Activated CD4-positive, alpha-beta T cell treated with anti-CD3 and anti-CD28 coated beads, Interleukin-2, amount 10 ng/mL, durations not matched to agents 24 days and 14 days (primary cell): ENCODE measurements at regions of chr2 and their contacts with region 1.

Region 1: DNA sequence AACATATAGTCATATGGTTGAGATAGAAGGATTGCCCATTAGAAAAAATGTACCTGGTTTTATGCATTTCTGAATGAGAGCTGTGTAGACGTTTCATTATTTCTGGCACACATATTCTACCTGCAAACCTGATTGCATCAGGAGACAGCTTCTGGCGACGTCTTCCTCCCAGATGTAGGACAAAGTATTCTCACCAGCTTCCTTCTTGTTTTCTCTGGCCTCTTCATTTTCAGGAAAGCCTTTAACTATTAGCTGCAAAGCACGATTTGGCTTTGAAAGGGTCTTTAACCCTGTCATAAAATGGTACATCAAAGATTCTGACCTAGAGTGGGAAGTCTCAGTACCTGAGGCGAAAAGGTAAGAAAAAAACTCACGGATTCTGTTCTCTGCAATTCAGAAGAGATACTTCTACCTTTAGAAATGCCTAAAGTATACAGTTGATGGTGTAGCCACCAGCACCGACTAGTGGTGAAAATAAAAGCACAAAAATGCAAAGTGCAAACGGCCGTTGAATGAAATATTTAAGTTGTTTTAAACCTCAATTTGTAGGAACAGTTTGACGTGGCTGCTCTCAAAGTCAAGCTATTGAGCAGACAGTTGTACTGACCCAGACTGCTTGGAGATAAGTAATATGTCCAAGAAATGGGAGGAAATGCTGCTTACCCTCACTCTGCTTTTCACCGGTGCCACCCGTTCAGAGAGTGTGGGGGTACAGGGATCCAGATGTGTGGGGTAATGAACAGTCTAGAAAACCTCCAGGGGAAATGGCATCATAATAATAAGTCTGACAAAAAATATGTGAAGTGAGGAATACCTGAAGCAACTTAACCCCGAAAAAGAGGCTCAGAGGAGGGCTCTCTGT is 20.2 kb downstream of the IL18RAP start:
- DNase-seq: peak; percentile 86
- H3K4me3 Mint-ChIP-seq: peak overlapping the region; percentile 73
- H3K27ac Mint-ChIP-seq: peak overlapping the region; percentile 72
- H3K4me1 Mint-ChIP-seq: peaks cover 8% of the 10 kb centered on the region
- H3K27me3 Mint-ChIP-seq: no peaks in the 10 kb centered on the region

Region 2: GRCh38 chr2:102020596-102021181 is 422.5 kb before region 1 on chr2:
- intact Hi-C with region 1: loop called (anchors 1 kb)
- DNase-seq: peak; percentile 95
- H3K4me3 Mint-ChIP-seq: no peak overlapping the region
- H3K27ac Mint-ChIP-seq: no peak overlapping the region
- H3K4me1 Mint-ChIP-seq: peaks cover 6% of the 10 kb centered on the region
- H3K27me3 Mint-ChIP-seq: peaks cover 8% of the 10 kb centered on the region

Region 3: GRCh38 chr2:102235491-102235890 is 207.7 kb before region 1 on chr2:
- intact Hi-C with region 1: loop called (anchors 2 kb)
- DNase-seq: peak; percentile 77
- H3K4me3 Mint-ChIP-seq: no peak overlapping the region
- H3K27ac Mint-ChIP-seq: no peak overlapping the region
- H3K4me1 Mint-ChIP-seq: peaks cover 36% of the 10 kb centered on the region
- H3K27me3 Mint-ChIP-seq: no peaks in the 10 kb centered on the region

Region 4: GRCh38 chr2:102251042-102251848 is 192.0 kb before region 1 on chr2:
- intact Hi-C with region 1: loop called (anchors 1 kb)
- DNase-seq: peak; percentile 87
- H3K4me3 Mint-ChIP-seq: peak overlapping the region; percentile 84
- H3K27ac Mint-ChIP-seq: peak overlapping the region; percentile 87
- H3K4me1 Mint-ChIP-seq: peaks cover 33% of the 10 kb centered on the region
- H3K27me3 Mint-ChIP-seq: peaks cover 2% of the 10 kb centered on the region

Region 5: GRCh38 chr2:102355526-102356380 is 87.4 kb before region 1 on chr2 and contains the start of gene IL18R1:
- intact Hi-C with region 1: loop called (anchors 1 kb)
- DNase-seq: peak; percentile 92
- H3K4me3 Mint-ChIP-seq: peak within 1 kb of the TSS; percentile 99
- H3K27ac Mint-ChIP-seq: peak within 1 kb of the TSS; percentile 99
- H3K4me1 Mint-ChIP-seq: peaks cover 39% of the 10 kb centered on the region
- H3K27me3 Mint-ChIP-seq: no peaks in the 10 kb centered on the region
- total RNA-seq, gene IL18R1: 41.7 and 50.2 TPM in 2 replicates